IMR-90 (cell line): ENCODE measurements at regions of chr19 and their contacts with region 1.

Region 1: DNA sequence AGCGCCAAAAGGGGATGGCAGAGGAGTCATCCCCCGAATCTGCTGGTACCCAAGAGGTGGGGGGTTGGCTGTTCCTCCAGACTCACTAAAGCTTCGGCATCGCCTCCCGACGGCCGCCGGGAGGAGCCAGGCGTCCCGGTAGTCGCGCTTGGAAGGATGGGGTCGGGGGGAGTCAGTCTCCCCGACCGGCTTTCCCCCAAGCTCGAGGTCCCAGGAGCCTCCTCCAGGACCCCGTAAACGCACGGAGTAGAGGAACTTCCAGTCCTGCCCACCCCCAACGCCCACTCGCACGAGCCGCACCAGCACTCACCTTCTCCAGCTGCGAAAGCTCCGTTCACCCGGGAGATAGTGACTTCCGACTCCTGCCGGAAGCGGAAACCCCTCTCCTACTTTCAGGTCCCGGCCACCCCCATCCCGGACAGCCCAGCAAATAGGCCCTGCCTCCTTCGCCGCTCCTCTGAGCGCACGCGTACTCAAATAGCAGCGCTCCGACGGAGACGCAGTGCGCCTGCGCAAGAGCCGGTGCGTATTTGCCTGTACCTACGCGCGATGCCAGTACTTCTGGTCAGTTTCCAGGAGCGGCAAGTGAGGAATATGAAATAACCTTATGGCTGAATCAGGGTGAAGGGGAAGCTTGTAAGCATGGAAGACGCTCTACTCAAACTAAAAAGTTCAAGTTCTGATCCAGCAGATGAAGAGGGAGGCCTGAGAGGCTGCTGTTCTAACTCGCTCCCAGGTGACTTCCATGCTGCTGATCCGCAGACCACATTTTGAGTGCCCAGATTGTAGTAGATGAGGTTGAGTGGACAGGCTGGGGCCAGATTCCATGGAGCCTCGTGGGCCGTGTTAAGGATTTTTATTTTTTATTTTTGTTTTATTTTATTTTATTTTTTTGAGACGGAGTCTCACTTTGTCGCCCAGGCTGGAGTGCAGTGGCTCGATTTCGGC is at the start of gene ELOF1:
- DNase-seq: peak; percentile 98
- ATAC-seq: peak; percentile 97
- H3K4me3 ChIP-seq: peak within 1 kb of the TSS; percentile 73
- H3K27ac ChIP-seq: peak within 1 kb of the TSS; percentile 49
- H3K4me1 ChIP-seq: no peaks in the 10 kb centered on the region
- H3K27me3 ChIP-seq: no peaks in the 10 kb centered on the region
- CTCF ChIP-seq: 0 out of 2 replicates have a peak, but pooled peaks have one; percentile 15
- POLR2A ChIP-seq: peak; percentile 63; the same call in 1 of the 2 replicates
- RAD21 ChIP-seq: no peak
- total RNA-seq, gene ELOF1: 62.4 and 121 TPM in 2 replicates

Region 2: GRCh38 chr19:11496391-11497163 is 62.6 kb before region 1 on chr19:
- CTCF ChIA-PET with region 1: no interaction called
- POLR2A ChIA-PET with region 1: no interaction called
- dilution Hi-C with region 1: no loop called
- in situ Hi-C with region 1: no loop called
- intact Hi-C with region 1: loop called (anchors 1 kb)
- DNase-seq: peak; percentile 86
- ATAC-seq: peak; percentile 98
- H3K4me3 ChIP-seq: no peak overlapping the region
- H3K27ac ChIP-seq: no peak overlapping the region
- H3K4me1 ChIP-seq: peaks cover 3% of the 10 kb centered on the region
- H3K27me3 ChIP-seq: no peaks in the 10 kb centered on the region
- CTCF ChIP-seq: peak; percentile 80
- POLR2A ChIP-seq: no peak
- RAD21 ChIP-seq: peak; percentile 77

Region 3: DNA sequence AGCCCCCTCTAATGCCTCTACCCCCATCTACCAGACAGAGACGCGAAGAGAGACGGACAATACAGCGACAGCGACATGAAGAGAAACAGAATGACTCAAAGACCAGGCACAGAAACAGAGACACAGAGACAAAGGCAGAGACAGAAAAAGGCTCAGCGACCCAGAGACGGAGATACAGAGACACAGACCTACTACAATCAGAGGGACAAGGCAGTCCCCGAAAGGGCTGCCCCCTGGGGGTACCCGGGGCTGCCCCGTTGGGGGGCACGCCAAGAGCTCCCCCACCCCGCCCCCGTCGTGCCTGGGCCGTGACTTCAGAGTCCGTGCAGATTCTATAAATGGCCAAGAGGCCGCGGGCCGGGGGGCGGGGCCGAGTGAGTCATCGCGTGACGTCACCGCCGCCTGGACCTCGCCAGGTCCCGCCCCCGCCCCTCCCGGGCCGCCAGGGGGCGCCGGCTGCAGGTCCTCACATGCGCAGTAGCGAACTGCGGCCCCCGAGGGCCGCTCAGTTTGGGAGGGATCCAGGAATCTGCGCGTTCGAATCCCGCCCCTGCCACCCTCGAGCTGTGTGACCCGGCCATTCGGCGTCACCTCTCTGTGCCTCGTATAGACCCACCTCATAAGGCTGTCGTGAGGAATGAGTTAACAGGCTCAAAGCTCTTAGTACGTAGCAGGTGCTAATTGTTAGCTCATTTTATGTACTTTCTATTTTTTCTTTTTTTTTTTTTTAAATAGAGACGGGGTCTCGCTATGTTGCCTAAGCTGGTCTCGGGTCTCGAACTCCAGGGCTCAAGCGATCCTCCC is 23.2 kb before region 1 on chr19:
- CTCF ChIA-PET with region 1: interaction called, 3 read pairs
- POLR2A ChIA-PET with region 1: interaction called, 4 read pairs
- dilution Hi-C with region 1: no loop called
- in situ Hi-C with region 1: no loop called
- intact Hi-C with region 1: loop called (anchors 2 kb)
- DNase-seq: peak; percentile 88
- ATAC-seq: peak; percentile 49
- H3K4me3 ChIP-seq: peak overlapping the region; percentile 29
- H3K27ac ChIP-seq: peak overlapping the region; percentile 92
- H3K4me1 ChIP-seq: peaks cover 22% of the 10 kb centered on the region
- H3K27me3 ChIP-seq: no peaks in the 10 kb centered on the region
- CTCF ChIP-seq: peak; percentile 99
- POLR2A ChIP-seq: 0 out of 2 replicates have a peak, but pooled peaks have one; percentile 40
- RAD21 ChIP-seq: peak; percentile 19; the same call in 1 of the 2 replicates

Region 4: DNA sequence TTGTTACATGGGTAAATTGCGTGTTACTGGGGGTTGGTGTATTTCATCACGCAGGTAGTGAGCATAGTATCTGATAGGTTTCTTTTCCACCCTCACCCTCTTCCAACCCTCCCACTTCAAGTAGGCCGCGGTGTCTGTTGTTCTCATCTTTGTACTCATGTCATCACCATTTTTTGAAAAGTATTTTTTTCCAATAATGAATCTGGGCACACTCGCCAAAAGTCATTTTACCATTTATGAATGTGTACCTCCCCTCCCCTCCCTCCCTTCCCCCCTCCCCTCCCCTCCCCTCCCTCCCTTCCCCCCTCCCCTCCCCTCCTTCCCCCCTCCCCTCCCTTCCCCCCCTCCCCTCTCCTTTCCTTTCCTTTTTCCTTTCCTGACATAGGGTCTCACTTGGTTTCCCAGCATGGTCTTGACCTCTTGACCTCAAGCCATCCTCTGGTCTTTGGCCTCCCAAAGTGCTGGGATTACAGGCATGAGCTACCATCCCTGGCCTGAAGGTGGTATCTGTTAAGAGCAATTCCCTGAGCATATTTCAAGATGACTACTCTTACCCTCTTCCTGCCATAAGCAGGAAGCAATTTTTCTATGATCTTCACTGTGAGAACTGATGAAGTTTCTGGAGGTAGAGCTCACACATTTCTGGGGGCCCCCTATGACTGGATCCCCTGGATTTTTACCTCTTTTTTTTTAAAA is 53.8 kb after region 1 on chr19:
- CTCF ChIA-PET with region 1: no interaction called
- POLR2A ChIA-PET with region 1: no interaction called
- dilution Hi-C with region 1: no loop called
- in situ Hi-C with region 1: no loop called
- intact Hi-C with region 1: no loop called
- DNase-seq: no peak
- ATAC-seq: no peak
- H3K4me3 ChIP-seq: no peak overlapping the region
- H3K27ac ChIP-seq: no peak overlapping the region
- H3K4me1 ChIP-seq: no peaks in the 10 kb centered on the region
- H3K27me3 ChIP-seq: no peaks in the 10 kb centered on the region
- CTCF ChIP-seq: no peak
- POLR2A ChIP-seq: no peak
- RAD21 ChIP-seq: no peak

Region 5: GRCh38 chr19:11722414-11722813 is 163.3 kb after region 1 on chr19:
- CTCF ChIA-PET with region 1: no interaction called
- POLR2A ChIA-PET with region 1: no interaction called
- dilution Hi-C with region 1: no loop called
- in situ Hi-C with region 1: no loop called
- intact Hi-C with region 1: no loop called
- DNase-seq: no peak
- ATAC-seq: no peak
- H3K4me3 ChIP-seq: no peak overlapping the region
- H3K27ac ChIP-seq: no peak overlapping the region
- H3K4me1 ChIP-seq: no peaks in the 10 kb centered on the region
- H3K27me3 ChIP-seq: no peaks in the 10 kb centered on the region
- CTCF ChIP-seq: no peak
- POLR2A ChIP-seq: no peak
- RAD21 ChIP-seq: no peak